Ovary (tissue), 10 donors: ENCODE measurements at regions of chr22 and their contacts with region 1.

Region 1: DNA sequence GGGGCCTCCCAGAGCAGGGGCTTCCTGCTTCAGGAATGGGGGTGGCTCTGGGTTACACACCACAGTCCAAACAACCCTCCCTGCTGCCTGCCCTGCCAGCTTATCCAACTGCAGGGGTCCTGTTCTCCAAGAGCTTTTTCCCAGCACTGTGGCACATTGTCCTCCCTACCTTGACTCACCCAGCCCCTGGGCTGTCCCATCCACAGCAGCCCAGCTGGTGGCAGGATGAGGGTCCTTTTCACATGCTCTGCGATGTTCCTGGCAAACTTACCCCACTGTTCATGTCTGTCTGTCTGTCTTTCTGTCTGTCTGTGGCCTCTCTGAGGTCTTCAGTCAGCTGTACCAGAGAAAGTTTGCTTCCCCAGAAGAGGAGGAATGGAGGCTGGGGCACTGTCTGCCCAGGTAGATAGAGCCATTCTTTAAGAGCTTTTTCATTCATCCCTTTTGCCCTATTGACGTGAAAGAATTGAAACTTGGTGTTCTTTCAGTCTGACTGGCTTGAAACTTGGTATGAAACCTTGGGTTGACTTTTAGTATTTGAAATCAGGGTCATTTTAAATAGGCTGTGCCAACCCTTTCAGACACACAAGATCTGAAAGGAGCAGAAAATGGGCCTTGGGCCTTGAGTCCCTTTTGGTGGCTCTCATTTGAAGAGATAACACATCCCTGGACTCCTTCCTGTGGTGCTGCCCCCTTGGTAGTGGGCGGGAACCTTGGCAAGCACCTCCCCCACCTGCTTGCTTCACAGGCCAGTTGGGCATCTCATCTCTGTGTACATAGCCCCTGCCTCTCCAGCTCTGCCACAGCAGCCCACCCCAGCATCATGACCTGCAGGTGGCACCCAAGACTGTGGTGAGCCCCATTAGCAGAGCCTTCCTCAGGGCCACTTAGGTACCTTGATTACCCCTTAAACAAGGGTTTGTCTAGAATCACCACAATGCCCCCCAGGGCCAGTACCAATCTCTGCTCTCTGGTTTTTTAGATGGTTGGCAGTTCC is 74.6 kb upstream of the SUSD2 start:
- DNase-seq: peak in 3 of 5 donors; percentile 21 to 42 (median 40)
- H3K4me3 ChIP-seq: no peak overlapping the region
- H3K27ac ChIP-seq: peak overlapping the region in 1 of 2 donors; percentile 51
- H3K4me1 ChIP-seq: peaks cover 1% of the 10 kb centered on the region
- H3K27me3 ChIP-seq: no peaks in the 10 kb centered on the region
- CTCF ChIP-seq: peak in 2 of 3 donors; percentile 32 to 42
- EP300 ChIP-seq: no peak
- POLR2A ChIP-seq: no peak

Region 2: GRCh38 chr22:23023294-23023693 is 1083.4 kb before region 1 on chr22:
- intact Hi-C with region 1: no loop called
- DNase-seq: no peak
- H3K4me3 ChIP-seq: no peak overlapping the region
- H3K27ac ChIP-seq: no peak overlapping the region
- H3K4me1 ChIP-seq: no peaks in the 10 kb centered on the region
- H3K27me3 ChIP-seq: no peaks in the 10 kb centered on the region
- CTCF ChIP-seq: no peak
- EP300 ChIP-seq: no peak
- POLR2A ChIP-seq: no peak

Region 3: GRCh38 chr22:24156913-24157821 is 50.5 kb after region 1 on chr22:
- intact Hi-C with region 1: loop called in 2 of 4 experiments (anchors 5 to 10 kb)
- DNase-seq: peak; percentile 75 to 84 (median 80)
- H3K4me3 ChIP-seq: peak overlapping the region; percentile 75
- H3K27ac ChIP-seq: peak overlapping the region; percentile 16 to 78
- H3K4me1 ChIP-seq: peaks cover 13% of the 10 kb centered on the region
- H3K27me3 ChIP-seq: no peaks in the 10 kb centered on the region
- CTCF ChIP-seq: peak; percentile 76 to 80 (median 76)
- EP300 ChIP-seq: no peak
- POLR2A ChIP-seq: no peak

Region 4: DNA sequence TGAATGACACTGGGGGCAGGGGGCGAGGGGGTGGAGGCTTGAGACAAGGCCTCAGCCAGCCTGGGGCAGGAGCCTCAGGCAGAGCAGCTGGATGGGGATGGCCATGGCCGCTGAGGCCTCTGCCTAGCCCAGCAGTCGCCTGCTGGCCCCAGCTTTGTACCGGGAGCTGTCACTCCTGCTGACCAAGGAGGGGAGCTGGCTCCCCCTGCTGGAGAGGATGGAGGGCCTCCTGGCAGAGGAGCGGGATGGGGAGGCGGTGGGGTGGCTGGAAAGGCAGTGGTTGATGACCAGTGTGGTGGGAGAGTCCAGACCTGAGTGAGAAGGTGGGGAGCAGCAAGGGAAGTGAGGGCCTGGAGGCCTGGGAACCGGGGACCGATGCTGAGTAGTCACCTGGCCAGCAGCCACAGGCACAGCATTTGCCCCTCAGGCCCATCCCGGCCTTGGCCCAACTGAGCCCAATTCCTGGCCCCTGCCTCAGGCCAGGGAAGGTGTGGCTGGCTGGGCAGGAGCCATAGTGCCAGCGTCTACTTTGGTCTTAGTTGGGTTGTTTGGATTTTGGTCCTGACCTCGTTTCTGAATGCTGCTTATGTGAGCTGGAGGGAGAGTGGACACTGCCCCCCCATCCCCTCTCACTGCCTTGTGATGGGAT is 68.6 kb after region 1 on chr22:
- intact Hi-C with region 1: loop called in 3 of 4 experiments (anchors 2 to 5 kb)
- DNase-seq: peak; percentile 79 to 87 (median 85)
- H3K4me3 ChIP-seq: no peak overlapping the region
- H3K27ac ChIP-seq: peak overlapping the region; percentile 19 to 55
- H3K4me1 ChIP-seq: no peaks in the 10 kb centered on the region
- H3K27me3 ChIP-seq: no peaks in the 10 kb centered on the region
- CTCF ChIP-seq: peak; percentile 61 to 96 (median 83)
- EP300 ChIP-seq: no peak
- POLR2A ChIP-seq: no peak

Region 5: DNA sequence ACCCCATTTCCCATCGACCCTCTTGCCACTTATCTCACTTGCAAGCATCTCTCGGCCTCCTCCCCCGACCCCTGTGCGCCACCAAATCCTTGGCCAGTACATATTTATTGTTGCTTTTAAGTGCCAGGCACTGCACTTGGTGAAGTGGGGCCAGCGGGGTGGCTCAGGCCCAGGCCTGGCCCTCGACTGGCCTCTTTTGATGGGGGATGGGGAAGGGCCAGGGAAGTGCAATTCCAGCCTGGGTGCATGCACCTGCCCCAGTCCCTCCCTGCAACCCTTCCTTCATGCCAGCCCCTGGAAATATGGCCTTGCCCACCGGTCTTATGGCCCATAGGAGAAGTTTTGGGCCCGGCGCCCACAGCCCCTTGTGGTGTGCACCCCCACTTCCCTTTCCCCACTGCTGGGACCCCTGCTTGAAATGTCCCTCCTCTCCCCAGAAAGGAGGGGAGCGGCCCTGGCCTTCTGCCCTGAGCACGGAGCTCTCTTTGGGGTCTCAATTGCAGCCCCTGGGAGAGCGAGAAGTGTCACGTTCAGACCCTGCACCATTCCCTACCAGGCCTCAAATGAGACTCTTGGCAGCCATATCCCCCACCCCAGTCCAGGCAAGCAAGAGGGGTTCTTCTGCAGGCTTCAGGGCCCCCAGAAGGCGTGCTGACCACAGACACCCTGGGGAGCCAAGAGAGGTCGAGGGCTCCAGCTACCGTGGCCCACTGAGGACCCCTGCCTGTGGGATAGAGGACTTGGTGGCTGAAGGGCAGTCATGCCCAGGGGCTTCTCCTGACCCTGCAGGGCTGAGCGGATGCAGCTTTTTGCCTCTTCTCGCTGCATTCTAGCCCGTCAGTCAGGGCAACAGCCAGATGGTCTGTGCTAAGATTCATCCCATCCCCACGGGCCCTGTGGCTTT is 75.6 kb after region 1 on chr22:
- intact Hi-C with region 1: loop called in 3 of 4 experiments (anchors 2 to 5 kb)
- DNase-seq: peak in 2 of 5 donors; percentile 23 to 31
- H3K4me3 ChIP-seq: no peak overlapping the region
- H3K27ac ChIP-seq: no peak overlapping the region
- H3K4me1 ChIP-seq: peaks cover 2% of the 10 kb centered on the region
- H3K27me3 ChIP-seq: no peaks in the 10 kb centered on the region
- CTCF ChIP-seq: no peak
- EP300 ChIP-seq: no peak
- POLR2A ChIP-seq: no peak

Region 6: DNA sequence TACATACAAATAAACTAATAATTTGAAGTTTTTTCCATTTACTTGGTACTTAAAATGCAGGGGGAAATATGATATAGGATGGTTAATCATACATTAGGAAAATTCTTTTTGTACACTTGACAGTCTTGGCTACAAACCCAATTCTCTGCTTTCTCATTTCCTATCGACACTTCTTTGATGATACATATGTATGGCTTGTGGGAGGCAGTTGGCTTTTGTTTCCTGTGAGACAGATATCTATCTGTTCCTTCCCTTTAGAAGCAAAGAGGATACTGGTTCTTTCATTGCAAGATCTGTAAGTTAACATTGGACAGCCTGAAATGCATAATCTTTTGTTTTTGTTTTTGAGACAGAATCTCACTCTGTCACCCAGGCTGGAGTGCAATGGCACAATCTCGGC is 272.9 kb after region 1 on chr22:
- intact Hi-C with region 1: no loop called
- DNase-seq: no peak
- H3K4me3 ChIP-seq: no peak overlapping the region
- H3K27ac ChIP-seq: no peak overlapping the region
- H3K4me1 ChIP-seq: no peaks in the 10 kb centered on the region
- H3K27me3 ChIP-seq: no peaks in the 10 kb centered on the region
- CTCF ChIP-seq: no peak
- EP300 ChIP-seq: no peak
- POLR2A ChIP-seq: no peak

Region 7: DNA sequence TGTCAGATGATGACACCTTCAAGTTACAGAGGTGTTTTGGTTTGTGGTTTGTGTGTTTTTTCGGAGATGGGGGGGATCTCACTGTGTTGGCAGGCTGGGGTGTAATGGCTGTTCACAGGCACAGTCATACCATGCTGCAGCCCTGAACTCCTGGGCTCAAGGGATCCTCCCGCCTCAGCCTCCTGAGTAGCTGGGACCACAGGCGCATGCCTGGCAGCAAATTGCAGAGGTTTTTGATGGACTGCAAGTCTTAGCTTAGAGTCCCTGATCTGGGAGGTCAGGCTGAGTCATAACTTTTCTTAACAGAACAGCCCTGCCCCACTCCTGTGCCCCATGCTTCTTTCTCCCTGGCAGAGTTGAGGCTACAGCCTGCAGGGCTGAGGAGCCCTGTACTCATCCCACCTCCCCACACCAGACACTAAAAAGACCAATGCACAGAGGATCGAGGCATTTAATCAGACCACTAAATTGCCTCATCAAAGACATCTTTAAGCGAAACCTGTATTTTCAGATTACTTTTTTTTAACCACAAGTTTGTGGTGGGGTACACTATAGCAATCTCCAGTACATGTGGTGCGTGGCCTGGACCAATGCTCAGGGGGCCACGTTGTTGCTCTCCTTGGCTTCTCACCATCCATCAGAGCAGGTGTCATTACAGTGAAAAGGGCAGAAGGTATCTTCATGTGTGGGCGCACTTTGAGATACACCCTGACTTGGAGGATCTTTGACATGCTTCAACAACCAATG is 303.6 kb after region 1 on chr22:
- intact Hi-C with region 1: no loop called
- DNase-seq: no peak
- H3K4me3 ChIP-seq: no peak overlapping the region
- H3K27ac ChIP-seq: no peak overlapping the region
- H3K4me1 ChIP-seq: peaks cover 11% of the 10 kb centered on the region
- H3K27me3 ChIP-seq: no peaks in the 10 kb centered on the region
- CTCF ChIP-seq: no peak
- EP300 ChIP-seq: no peak
- POLR2A ChIP-seq: no peak